ENCODE measurements at regions of chr14 and their contacts with region 1.

Region 1: GRCh38 chr14:24071144-24071697 is at the start of gene CPNE6:
- DNase-seq: no peak
- ATAC-seq: no peak
- H3K4me3 Mint-ChIP-seq: no peak within 1 kb of the TSS
- H3K27ac Mint-ChIP-seq: no peak within 1 kb of the TSS
- H3K4me1 Mint-ChIP-seq: peaks cover 15% of the 10 kb centered on the region
- H3K27me3 Mint-ChIP-seq: peaks cover 3% of the 10 kb centered on the region
- total RNA-seq, gene CPNE6: 0.12 TPM in 1 of 2 experiments, not detected in the other

Region 2: GRCh38 chr14:24058260-24058950 is 12.8 kb before region 1 on chr14:
- CTCF ChIA-PET with region 1: interaction called, 11 read pairs
- DNase-seq: peak; percentile 69
- ATAC-seq: peak; percentile 74
- H3K4me3 Mint-ChIP-seq: no peak overlapping the region
- H3K27ac Mint-ChIP-seq: no peak overlapping the region
- H3K4me1 Mint-ChIP-seq: peaks cover under 1% of the 10 kb centered on the region
- H3K27me3 Mint-ChIP-seq: peaks cover 11% of the 10 kb centered on the region